ENCODE measurements at regions of chr12 and their contacts with region 1.

Region 1: DNA sequence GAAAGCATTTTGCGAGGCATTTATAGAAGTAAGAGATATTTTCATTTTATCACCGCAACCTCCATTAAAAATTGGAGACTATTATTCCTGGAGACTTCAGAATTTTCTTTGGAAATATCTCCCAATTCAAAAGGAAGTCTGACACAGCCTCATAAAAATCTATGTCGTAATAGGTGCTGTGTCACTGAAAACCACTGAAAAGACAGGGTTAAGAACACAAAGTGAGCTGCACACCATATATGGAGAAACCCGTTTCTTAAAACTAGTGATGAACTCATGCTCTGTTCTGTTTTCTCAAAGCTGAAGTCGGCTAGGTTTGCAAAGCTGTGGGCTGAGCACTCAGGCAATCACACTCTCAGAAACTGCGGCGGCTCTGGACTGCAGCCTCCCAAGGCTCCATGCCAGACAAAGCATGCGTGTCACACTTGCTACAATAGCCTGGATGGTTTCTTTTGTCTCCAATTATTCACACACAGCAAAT is at the start of gene GLIPR1:
- DNase-seq: peak; percentile 92
- H3K4me3 Mint-ChIP-seq: peak within 1 kb of the TSS; percentile 77
- H3K27ac Mint-ChIP-seq: peak within 1 kb of the TSS; percentile 91
- H3K4me1 Mint-ChIP-seq: peaks cover 67% of the 10 kb centered on the region
- H3K27me3 Mint-ChIP-seq: peaks cover 2% of the 10 kb centered on the region
- total RNA-seq, gene GLIPR1: 4.3 and 5.3 TPM in 2 replicates

Region 2: DNA sequence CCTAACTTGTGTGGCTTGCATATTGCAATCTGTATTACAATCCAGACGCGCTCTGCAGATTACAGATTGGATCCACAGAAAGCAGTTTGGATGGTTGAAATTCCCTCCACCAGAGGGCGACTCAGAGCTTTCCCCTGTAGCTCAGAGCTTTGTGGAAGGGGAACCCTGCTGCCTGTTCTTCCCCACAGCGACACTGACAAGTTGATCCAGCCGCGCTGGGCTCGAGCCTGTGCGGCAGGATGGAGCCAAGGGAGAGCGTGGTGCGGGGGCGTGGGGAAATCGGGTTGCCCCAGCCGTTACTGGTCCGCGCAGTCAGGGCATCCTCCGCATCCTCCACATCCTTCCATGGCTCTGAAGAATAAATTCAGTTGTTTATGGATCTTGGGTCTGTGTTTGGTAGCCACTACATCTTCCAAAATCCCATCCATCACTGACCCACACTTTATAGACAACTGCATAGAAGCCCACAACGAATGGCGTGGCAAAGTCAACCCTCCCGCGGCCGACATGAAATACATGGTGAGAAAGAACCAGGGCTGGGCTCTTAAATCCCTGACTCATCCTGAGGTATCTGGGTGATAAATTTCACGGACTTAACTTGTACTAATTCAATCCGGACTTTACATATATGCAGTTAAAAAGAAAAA is 146.0 kb before region 1 on chr12 and contains the start of gene GLIPR1L1:
- intact Hi-C with region 1: loop called (anchors 1 kb)
- DNase-seq: peak; percentile 94
- H3K4me3 Mint-ChIP-seq: peak within 1 kb of the TSS; percentile 78
- H3K27ac Mint-ChIP-seq: no peak within 1 kb of the TSS
- H3K4me1 Mint-ChIP-seq: peaks cover 21% of the 10 kb centered on the region
- H3K27me3 Mint-ChIP-seq: peaks cover 48% of the 10 kb centered on the region
- total RNA-seq, gene GLIPR1L1: not detected in 2 replicates

Region 3: DNA sequence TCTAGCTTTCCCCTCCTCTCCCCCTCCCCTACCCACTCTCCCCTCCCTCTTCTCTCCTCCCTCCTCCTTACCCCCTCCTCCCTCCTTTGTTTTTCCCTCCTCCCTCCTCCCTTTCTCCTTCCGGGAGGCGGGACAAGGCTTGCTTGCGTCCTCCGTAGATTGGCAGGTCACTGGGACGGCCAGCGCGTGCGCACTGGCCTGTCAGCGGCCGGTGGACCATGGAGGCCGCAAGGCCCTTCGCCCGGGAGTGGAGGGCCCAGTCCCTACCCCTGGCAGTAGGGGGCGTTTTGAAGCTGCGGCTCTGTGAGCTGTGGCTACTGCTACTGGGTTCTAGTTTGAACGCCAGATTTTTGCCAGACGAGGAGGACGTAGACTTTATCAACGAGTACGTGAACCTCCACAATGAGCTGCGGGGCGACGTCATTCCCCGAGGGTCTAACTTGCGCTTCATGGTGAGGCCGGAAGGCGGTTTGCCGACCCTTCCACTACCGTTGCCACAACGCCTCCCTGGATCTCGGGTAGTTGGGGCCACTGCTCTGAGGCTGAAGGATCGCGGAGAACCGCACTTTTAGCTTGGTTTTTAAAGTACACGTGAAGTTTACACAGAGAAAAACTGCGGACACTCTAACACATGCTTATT is 89.5 kb before region 1 on chr12 and contains the start of gene GLIPR1L2:
- intact Hi-C with region 1: loop called (anchors 1 kb)
- DNase-seq: peak; percentile 95
- H3K4me3 Mint-ChIP-seq: peak within 1 kb of the TSS; percentile 94
- H3K27ac Mint-ChIP-seq: peak within 1 kb of the TSS; percentile 92
- H3K4me1 Mint-ChIP-seq: peaks cover 27% of the 10 kb centered on the region
- H3K27me3 Mint-ChIP-seq: peaks cover 3% of the 10 kb centered on the region
- total RNA-seq, gene GLIPR1L2: 0.36 TPM in 1 of 2 replicates, not detected in the other

Region 4: GRCh38 chr12:75511116-75512048 is 30.9 kb after region 1 on chr12 and contains the start of gene KRR1:
- intact Hi-C with region 1: loop called (anchors 1 kb)
- DNase-seq: peak; percentile 97
- H3K4me3 Mint-ChIP-seq: peak within 1 kb of the TSS; percentile 98
- H3K27ac Mint-ChIP-seq: peak within 1 kb of the TSS; percentile 100
- H3K4me1 Mint-ChIP-seq: peaks cover 31% of the 10 kb centered on the region
- H3K27me3 Mint-ChIP-seq: peaks cover 3% of the 10 kb centered on the region
- total RNA-seq, gene KRR1: 134 and 141 TPM in 2 replicates

Region 5: GRCh38 chr12:75933101-75933500 is 452.6 kb after region 1 on chr12:
- intact Hi-C with region 1: loop called (anchors 2 kb)
- DNase-seq: no peak
- H3K4me3 Mint-ChIP-seq: no peak overlapping the region
- H3K27ac Mint-ChIP-seq: no peak overlapping the region
- H3K4me1 Mint-ChIP-seq: peaks cover 45% of the 10 kb centered on the region
- H3K27me3 Mint-ChIP-seq: no peaks in the 10 kb centered on the region

Region 6: DNA sequence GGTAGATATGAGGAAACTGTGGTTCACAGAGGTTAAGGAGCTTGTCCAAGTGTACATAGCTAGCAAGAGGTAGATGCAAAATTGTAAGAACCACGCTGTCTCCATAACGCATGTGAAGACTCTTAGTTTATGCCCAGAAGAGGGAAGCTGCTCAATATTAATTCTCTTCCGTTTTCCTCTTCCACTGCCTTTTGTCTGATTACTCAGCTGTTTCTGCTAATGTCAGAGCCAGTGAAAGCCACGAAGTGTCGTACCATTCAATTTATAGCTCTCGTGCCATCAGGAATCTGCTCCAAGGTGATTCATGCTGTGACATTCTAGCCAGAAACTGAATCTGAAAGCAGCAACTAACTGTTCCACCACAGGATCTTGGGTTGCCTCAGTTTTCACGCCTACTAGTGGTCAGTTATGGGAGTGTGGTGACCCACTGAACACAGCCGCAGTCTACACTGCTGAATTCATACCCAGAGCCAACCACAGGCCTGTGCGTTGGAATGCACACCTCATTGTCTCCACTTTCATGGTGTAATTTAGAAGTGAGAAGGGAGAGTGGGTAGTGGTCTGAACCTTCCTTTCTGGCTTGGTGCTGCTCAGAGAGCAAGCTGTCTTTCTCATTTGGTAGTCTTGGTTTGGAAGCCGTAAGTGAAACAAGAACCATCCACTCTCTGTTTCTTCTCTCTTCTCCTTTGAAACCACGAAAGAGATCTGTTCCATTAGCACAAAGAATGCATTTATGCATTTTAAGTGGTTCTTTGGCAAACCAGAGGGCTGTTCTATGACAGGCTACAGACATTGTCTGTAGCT is 678.2 kb after region 1 on chr12:
- intact Hi-C with region 1: loop called (anchors 1 kb)
- DNase-seq: peak; percentile 91
- H3K4me3 Mint-ChIP-seq: peak overlapping the region; percentile 6
- H3K27ac Mint-ChIP-seq: peak overlapping the region; percentile 84
- H3K4me1 Mint-ChIP-seq: peaks cover 16% of the 10 kb centered on the region
- H3K27me3 Mint-ChIP-seq: peaks cover 30% of the 10 kb centered on the region

Region 7: GRCh38 chr12:76348079-76348901 is 867.8 kb after region 1 on chr12 and contains the start of gene BBS10:
- intact Hi-C with region 1: loop called (anchors 2 kb)
- DNase-seq: peak; percentile 96
- H3K4me3 Mint-ChIP-seq: peak within 1 kb of the TSS; percentile 97
- H3K27ac Mint-ChIP-seq: peak within 1 kb of the TSS; percentile 88
- H3K4me1 Mint-ChIP-seq: peaks cover 23% of the 10 kb centered on the region
- H3K27me3 Mint-ChIP-seq: no peaks in the 10 kb centered on the region
- total RNA-seq, gene BBS10: 3.8 and 4.7 TPM in 2 replicates